Dorsolateral prefrontal cortex (tissue), 120 donors: ENCODE measurements at regions of chr11 and their contacts with region 1.

Region 1: GRCh38 chr11:45698777-45699497 is 33.5 kb upstream of the CHST1 start:
- DNase-seq: no peak
- H3K4me3 ChIP-seq: no peak overlapping the region
- H3K27ac ChIP-seq: no peak overlapping the region
- H3K27me3 ChIP-seq: no peaks in the 10 kb centered on the region
- CTCF ChIP-seq: no peak

Region 2: DNA sequence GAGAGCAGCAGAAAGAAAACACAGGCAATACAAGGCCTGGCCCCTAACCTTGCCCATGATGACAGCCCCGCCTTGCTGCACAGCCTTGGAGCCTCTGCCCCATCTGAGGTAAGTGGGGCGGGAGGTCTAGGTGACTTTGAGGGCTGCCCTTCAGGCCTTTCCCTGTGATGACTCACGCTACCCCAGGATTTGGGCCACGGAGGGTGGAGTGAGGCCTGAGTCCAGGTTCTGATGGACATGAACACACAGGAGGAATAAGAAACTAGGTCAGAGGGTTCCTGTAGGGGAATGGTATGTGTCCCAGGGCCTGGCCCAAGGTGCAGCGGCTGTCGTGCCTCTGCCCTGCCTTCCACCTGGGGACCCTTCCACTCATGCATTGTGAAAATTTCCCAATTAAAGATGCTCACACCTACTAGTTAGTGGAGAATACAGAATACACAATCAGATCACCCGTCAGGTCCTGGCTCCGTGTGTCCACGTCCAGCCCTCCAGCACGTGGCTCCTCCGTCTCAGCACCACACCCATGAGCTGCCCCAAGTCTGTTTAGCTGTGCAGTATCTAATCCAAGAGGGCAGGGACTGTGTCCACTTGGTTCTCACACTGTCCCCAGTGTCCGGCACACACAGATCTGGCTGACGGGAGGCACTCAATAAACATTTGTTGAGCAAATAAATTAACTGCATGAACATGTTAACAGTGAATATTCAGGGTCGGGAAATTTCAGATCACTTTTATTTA is 144.5 kb before region 1 on chr11:
- intact Hi-C with region 1: no loop called
- DNase-seq: peak in 1 of 10 donors; percentile 11
- H3K4me3 ChIP-seq: no peak overlapping the region
- H3K27ac ChIP-seq: no peak overlapping the region
- H3K27me3 ChIP-seq: no peaks in the 10 kb centered on the region
- CTCF ChIP-seq: no peak

Region 3: GRCh38 chr11:45754261-45754709 is 55.3 kb after region 1 on chr11:
- intact Hi-C with region 1: loop called in 1 of 2 experiments (anchors 5 kb)
- DNase-seq: no peak
- H3K4me3 ChIP-seq: no peak overlapping the region
- H3K27ac ChIP-seq: no peak overlapping the region
- H3K27me3 ChIP-seq: peaks cover 0 to 17% (median 0%) of the 10 kb centered on the region in 45 donors
- CTCF ChIP-seq: no peak

Region 4: DNA sequence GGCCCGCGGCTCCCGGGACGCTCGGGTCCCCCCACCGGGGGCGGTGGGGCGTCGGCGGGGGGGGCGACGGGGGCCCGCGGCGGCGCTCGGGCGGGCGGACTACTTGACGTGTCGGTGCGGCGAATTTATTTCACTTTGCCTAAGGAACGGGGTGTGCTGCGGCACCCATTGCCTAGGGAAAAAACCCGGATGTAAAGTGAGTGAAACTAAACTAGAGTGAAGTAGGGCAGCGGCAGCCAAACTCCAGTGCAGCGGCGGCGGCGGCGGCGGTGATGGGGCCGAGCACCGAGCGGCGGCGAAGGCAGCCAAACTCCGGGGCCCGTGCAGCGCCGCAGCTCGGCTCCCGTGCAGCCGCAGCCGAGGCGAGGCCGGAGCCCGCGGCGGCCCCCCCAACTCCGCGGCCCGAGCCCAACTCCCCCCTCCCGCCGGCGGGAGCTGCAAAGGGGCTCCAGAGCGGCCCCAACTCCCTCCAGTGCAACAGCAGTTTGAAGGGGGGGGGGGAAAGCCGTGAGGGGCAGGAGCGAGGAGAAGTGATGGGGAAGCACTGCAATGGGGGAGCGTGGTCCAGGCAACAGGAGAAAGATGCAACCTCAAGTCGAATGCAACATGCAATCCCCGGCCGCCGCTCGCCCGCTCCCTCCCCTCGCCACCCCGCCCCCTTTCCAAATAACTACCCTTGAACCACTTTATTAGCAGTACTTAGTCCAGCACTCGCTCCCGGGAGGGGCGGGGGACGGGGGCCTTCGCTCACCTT is 423.0 kb after region 1 on chr11:
- intact Hi-C with region 1: no loop called
- DNase-seq: peak; percentile 55 to 79 (median 71)
- H3K4me3 ChIP-seq: peak overlapping the region; percentile 59 to 89 (median 76)
- H3K27ac ChIP-seq: peak overlapping the region; percentile 79 to 99 (median 94)
- H3K27me3 ChIP-seq: no peaks in the 10 kb centered on the region
- CTCF ChIP-seq: peak in 4 of 56 donors; percentile 5 to 19 (median 15)